ENCODE measurements at regions of chr6 and their contacts with region 1.

Region 1: DNA sequence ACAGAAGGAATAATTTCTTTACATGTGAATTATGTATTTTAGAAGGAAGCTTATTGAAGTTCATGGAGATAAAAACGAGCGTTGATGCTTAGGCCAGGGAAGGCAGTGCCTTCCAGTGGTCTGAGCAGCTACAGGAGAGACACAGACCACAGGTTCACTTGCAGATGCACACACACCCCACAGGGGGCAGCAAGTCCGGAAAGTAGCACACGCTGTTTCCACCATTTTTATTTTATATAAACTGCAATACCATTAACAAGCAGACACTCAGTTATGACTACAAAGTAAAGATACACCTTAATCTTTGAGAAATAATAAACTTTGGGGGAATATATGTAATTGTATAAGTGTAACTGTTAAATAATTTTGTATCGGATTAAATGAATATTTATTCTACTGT is 13.5 kb upstream of the DACT2 start:
- DNase-seq: no peak
- H3K4me3 ChIP-seq: no peak overlapping the region
- H3K27ac ChIP-seq: no peak overlapping the region
- H3K4me1 ChIP-seq: peaks cover 0 to 12% (median 5%) of the 10 kb centered on the region in 4 experiments; a peak in 5 of 7 replicates
- H3K27me3 ChIP-seq: no peaks in the 10 kb centered on the region
- CTCF ChIP-seq: peak; percentile 44 to 65 (median 63)
- EP300 ChIP-seq: no peak
- POLR2A ChIP-seq: no peak
- RAD21 ChIP-seq: peak; percentile 17 to 38; a peak in 3 of 4 replicates

Region 2: GRCh38 chr6:168313431-168314011 is 19.5 kb before region 1 on chr6:
- CTCF ChIA-PET with region 1: interaction called, 11 read pairs
- POLR2A ChIA-PET with region 1: interaction called, 3 read pairs
- DNase-seq: peak in 1 of 2 experiments; percentile 48
- H3K4me3 ChIP-seq: peak overlapping the region in 1 of 4 experiments; percentile 5; a peak in 1 of 8 replicates
- H3K27ac ChIP-seq: 0 out of 2 replicates have a peak overlapping the region, but pooled peaks have one; percentile 35
- H3K4me1 ChIP-seq: peaks cover 10 to 19% (median 14%) of the 10 kb centered on the region in 4 experiments
- H3K27me3 ChIP-seq: peaks cover 0 to 7% (median 4%) of the 10 kb centered on the region in 4 experiments; a peak in 3 of 7 replicates
- CTCF ChIP-seq: no peak
- EP300 ChIP-seq: no peak
- POLR2A ChIP-seq: no peak
- RAD21 ChIP-seq: no peak

Region 3: DNA sequence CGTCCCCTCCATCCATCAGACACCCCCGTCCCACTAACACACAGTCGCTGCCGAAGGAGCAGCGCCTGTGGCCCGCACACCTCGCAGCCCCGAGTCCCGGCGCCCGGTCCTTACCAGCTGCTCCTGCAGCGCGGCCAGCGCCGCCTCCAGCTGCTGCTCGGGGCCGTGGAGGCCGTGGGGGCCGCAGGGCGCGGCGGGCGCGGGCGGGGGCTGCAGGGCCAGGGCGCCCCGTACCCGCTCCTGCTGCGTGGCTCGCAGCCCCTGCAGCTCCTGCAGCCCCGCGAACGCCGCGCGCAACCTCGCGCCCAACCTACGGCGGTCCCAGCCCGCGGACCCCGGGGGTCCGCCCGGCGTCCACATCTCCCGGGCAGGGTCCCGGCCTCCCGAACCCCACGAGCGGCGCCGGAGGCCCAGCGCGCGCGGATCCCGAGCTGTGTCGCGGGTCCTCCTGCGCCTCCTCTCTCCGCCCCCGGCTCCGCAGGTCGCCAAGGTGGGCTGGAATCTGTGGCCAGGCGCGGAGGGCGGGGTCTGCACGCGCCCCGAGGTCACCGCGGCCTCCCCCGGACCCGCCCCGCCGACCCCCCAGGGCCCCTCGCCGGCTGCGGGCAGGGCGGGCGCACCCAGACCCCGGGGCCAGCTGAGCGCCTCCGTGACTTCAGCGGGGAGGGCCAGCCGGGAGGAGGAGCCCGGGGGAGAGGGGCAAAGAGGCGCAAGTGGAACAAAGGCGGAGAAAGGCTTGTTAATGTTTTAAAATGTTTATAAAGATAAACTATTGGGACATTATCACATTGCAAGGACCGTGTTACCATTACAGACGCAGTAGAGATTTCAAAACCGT is 13.5 kb before region 1 on chr6 and contains the start of gene DACT2:
- CTCF ChIA-PET with region 1: interaction called, 19 read pairs
- POLR2A ChIA-PET with region 1: no interaction called
- DNase-seq: no peak
- H3K4me3 ChIP-seq: peak within 1 kb of the TSS; percentile 64 to 78 (median 67)
- H3K27ac ChIP-seq: no peak within 1 kb of the TSS
- H3K4me1 ChIP-seq: peaks cover 2 to 14% (median 8%) of the 10 kb centered on the region in 4 experiments; a peak in 6 of 7 replicates
- H3K27me3 ChIP-seq: peaks cover 0 to 19% (median 12%) of the 10 kb centered on the region in 4 experiments; a peak in 4 of 7 replicates
- CTCF ChIP-seq: no peak
- EP300 ChIP-seq: no peak
- POLR2A ChIP-seq: no peak; a peak in 1 of 3 replicates
- RAD21 ChIP-seq: no peak
- total RNA-seq, gene DACT2: 3.1 and 3.9 TPM in 2 replicates

Region 4: DNA sequence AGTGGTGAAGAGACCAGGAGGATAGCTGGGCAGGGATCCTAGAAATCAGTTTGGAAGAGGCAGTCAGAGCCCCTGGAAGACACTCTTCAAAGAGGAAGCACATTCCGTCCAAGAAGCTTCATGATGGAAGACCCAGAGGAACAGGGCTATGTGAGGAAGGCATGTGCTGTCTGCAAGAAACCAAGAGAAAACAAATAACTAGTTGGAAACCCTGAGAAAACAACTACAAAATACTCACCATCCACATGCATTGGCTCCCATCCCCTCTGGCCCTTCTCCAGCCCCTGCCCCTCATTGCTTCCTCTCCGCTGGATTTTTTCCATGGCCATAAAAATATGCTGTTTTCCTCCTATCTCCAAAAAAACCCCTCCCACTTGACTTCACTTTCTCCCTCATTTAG is 67.0 kb after region 1 on chr6:
- CTCF ChIA-PET with region 1: no interaction called
- POLR2A ChIA-PET with region 1: no interaction called
- DNase-seq: no peak
- H3K4me3 ChIP-seq: no peak overlapping the region
- H3K27ac ChIP-seq: no peak overlapping the region
- H3K4me1 ChIP-seq: no peaks in the 10 kb centered on the region
- H3K27me3 ChIP-seq: 0 out of 7 replicates have a peak, but pooled peaks cover 0 to 2% (median 0%) of the 10 kb centered on the region in 4 experiments
- CTCF ChIP-seq: no peak
- EP300 ChIP-seq: no peak
- POLR2A ChIP-seq: no peak
- RAD21 ChIP-seq: no peak

Measured in H1 (cell line).